ENCODE measurements at regions of chr1 and their contacts with region 1.

Region 1: GRCh38 chr1:77978969-77979876 is at the start of gene FUBP1:
- DNase-seq: peak; percentile 89 to 98
- ATAC-seq: peak; percentile 94 to 97 (median 94)
- H3K4me3 ChIP-seq: peak within 1 kb of the TSS; percentile 64 to 85 (median 74)
- H3K27ac ChIP-seq: peak within 1 kb of the TSS; percentile 83 to 99 (median 97)
- H3K4me1 ChIP-seq: peaks cover 11 to 60% (median 55%) of the 10 kb centered on the region in 9 donors
- H3K27me3 ChIP-seq: no peaks in the 10 kb centered on the region
- CTCF ChIP-seq: peak; percentile 55 to 89 (median 76)
- total RNA-seq, gene FUBP1: 54.1 to 77.6 (median 72.1) TPM

Region 2: DNA sequence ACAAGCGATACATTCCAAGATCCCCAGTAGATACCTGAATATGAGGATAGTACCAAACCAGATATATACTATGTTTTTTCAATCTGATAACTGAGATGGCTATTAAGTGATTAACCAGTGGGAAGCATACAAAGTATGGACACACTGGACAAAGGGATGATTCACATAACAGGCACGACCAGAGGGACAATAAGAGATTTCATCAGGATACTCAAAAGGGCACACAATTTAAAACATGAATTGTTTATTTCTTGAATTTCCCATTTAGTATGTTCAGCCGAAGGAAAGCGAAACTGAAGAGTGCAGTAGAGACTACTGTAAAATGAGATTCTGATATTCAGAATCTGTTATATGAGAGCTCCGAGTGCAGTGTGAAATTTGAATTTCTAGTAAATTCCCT is 307.4 kb before region 1 on chr1:
- intact Hi-C with region 1: no loop called
- DNase-seq: no peak
- ATAC-seq: no peak
- H3K4me3 ChIP-seq: no peak overlapping the region
- H3K27ac ChIP-seq: no peak overlapping the region
- H3K4me1 ChIP-seq: peaks cover 0 to 75% (median 27%) of the 10 kb centered on the region in 9 donors
- H3K27me3 ChIP-seq: no peaks in the 10 kb centered on the region
- CTCF ChIP-seq: no peak

Region 3: DNA sequence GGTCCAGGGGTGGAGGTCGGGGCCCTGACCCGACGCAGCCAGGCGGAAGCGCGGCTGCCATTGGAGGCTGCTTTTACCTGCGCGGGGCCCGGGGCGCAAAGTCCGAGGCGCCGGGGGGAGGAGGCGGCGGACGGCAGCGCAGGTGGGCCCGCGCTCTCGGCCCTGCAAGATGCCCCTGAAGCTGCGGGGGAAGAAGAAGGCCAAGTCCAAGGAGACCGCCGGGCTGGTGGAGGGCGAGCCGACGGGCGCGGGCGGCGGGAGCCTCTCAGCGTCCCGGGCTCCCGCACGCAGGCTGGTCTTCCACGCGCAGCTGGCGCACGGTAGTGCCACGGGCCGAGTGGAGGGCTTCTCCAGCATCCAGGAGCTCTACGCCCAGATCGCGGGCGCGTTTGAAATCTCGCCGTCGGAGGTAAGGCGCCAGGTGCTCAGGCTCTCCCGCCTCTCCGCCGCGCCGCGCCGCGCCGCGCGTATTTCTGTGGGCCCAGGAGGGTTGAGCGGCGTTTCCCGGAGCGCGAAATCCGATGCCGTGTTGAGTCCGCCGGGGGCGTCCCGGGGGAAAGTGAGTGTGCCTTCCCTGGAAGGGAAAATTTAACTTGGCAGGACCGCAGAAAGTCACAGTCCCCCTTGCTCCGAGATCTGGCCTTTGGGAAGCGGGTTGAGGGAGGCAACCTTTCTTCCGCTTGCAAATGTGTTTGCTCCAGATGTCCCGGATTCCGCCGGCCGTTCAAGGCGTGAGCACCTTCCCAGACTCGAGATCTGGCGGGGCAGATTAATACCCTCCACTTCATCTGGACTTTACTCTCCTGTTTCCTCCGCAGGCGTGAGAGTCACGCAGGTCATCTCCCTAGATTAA is 66.9 kb after region 1 on chr1 and contains the start of gene GIPC2:
- intact Hi-C with region 1: loop called in 3 of 10 experiments (anchors 2 to 10 kb)
- DNase-seq: peak; percentile 24 to 49
- ATAC-seq: peak; percentile 60 to 79 (median 68)
- H3K4me3 ChIP-seq: peak within 1 kb of the TSS; percentile 64 to 93 (median 77)
- H3K27ac ChIP-seq: peak within 1 kb of the TSS in 9 of 10 donors; percentile 64 to 88 (median 81)
- H3K4me1 ChIP-seq: peaks cover 0 to 55% (median 32%) of the 10 kb centered on the region in 9 donors
- H3K27me3 ChIP-seq: peaks cover 0 to 38% (median 0%) of the 10 kb centered on the region in 7 donors
- CTCF ChIP-seq: no peak
- total RNA-seq, gene GIPC2: 1.3 to 7.4 (median 3.7) TPM

Measured in heart right ventricle (tissue), 16 donors.